ENCODE measurements at regions of chr22 and their contacts with region 1.

Region 1: GRCh38 chr22:29625090-29625825 is 21.8 kb downstream of the NF2 start:
- DNase-seq: peak in 4 of 5 donors; percentile 33 to 48 (median 38)
- H3K4me3 ChIP-seq: no peak overlapping the region
- H3K4me3 Mint-ChIP-seq: peak overlapping the region in 3 of 8 donors; percentile 6 to 47 (median 6)
- H3K27ac ChIP-seq: no peak overlapping the region
- H3K27ac Mint-ChIP-seq: peak overlapping the region in 6 of 7 donors; percentile 8 to 88 (median 48)
- H3K4me1 ChIP-seq: peaks cover 41% of the 10 kb centered on the region
- H3K4me1 Mint-ChIP-seq: peaks cover 49 to 82% (median 64%) of the 10 kb centered on the region in 4 donors
- H3K27me3 ChIP-seq: no peaks in the 10 kb centered on the region
- H3K27me3 Mint-ChIP-seq: no peaks in the 10 kb centered on the region

Region 2: DNA sequence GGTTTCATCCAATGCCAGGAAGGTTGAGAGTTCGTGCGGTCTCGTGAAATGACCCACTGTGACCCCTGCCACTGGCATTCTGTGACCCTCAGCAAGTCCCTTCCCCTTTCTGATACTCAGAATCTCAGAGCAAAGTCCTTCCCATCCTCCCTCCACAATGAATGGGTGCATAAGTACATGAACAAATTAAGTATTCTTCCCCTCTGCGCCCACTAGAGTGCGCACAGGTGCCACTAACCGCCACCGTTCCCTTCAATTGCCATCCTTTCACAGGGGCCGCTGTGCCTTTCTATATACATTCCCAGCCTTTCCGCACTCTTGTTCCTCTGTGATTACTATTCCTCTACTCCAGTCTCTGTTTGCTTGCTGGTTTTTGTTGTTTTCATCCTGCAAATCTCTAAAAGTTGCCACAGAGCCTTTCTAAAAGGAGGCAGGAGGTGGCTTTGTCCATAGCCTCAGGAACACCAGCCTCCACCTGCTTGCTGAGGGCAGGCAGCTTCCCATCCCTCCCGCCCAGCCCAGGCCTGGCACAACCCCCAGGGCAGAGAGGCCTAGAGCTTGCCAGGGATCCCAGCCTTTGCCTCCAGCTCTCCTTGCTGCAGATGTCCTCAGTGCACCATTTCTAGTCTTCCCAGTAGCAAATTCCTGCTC is 230.2 kb before region 1 on chr22:
- CTCF ChIA-PET with region 1: no interaction called
- POLR2A ChIA-PET with region 1: no interaction called
- intact Hi-C with region 1: loop called (anchors 1 kb)
- DNase-seq: peak; percentile 50 to 65 (median 60)
- H3K4me3 ChIP-seq: no peak overlapping the region
- H3K4me3 Mint-ChIP-seq: peak overlapping the region in 1 of 8 donors; percentile 3
- H3K27ac ChIP-seq: no peak overlapping the region
- H3K27ac Mint-ChIP-seq: peak overlapping the region in 1 of 7 donors; percentile 43
- H3K4me1 ChIP-seq: peaks cover 3% of the 10 kb centered on the region
- H3K4me1 Mint-ChIP-seq: peaks cover 5 to 11% (median 6%) of the 10 kb centered on the region in 4 donors
- H3K27me3 ChIP-seq: no peaks in the 10 kb centered on the region
- H3K27me3 Mint-ChIP-seq: no peaks in the 10 kb centered on the region

Region 3: DNA sequence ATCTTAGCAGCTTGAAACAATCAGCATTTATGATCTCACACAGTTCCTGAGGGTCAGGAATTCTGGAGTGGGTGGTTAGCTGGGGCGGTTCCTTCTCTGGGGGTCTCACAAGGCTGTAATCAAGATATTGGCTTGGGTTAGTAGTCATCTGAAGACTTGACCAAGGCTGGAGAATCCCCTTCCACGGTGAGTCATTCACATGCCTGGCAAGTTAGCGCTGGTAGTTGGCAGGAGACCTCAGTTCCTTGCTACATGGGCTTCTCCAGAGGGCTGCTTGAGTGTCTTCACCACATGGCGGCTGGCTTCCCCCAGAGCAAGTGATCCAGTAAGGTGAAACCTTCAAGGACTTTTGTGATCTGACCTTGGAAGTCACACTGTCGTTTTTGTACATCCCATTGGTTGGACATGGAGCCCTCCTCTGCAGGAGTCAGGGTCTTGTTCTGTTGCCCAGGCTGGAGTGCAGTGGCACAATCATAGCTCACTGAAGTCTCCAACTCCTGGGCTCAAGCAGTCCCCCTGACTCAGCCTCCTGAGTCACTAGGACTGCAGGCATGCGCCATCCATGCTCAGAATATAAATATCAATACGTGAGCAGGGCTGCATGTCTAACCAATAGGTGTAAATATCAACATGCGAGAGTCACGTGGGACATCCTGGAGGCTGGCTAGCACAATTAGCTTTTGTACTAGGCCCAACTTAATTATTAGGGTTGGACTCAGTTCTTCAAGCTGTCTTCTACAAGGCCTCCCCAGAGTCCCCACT is 37.1 kb before region 1 on chr22:
- CTCF ChIA-PET with region 1: interaction called, 49 read pairs
- POLR2A ChIA-PET with region 1: interaction called, 3 read pairs
- intact Hi-C with region 1: loop called (anchors 1 kb)
- DNase-seq: no peak
- H3K4me3 ChIP-seq: no peak overlapping the region
- H3K4me3 Mint-ChIP-seq: no peak overlapping the region
- H3K27ac ChIP-seq: no peak overlapping the region
- H3K27ac Mint-ChIP-seq: peak overlapping the region in 3 of 7 donors; percentile 18 to 60 (median 46)
- H3K4me1 ChIP-seq: peaks cover 8% of the 10 kb centered on the region
- H3K4me1 Mint-ChIP-seq: peaks cover 8 to 12% (median 10%) of the 10 kb centered on the region in 4 donors
- H3K27me3 ChIP-seq: no peaks in the 10 kb centered on the region
- H3K27me3 Mint-ChIP-seq: no peaks in the 10 kb centered on the region

Region 4: GRCh38 chr22:29609139-29609538 is 16.1 kb before region 1 on chr22:
- CTCF ChIA-PET with region 1: interaction called, 34 read pairs
- POLR2A ChIA-PET with region 1: interaction called, 8 read pairs
- intact Hi-C with region 1: no loop called
- DNase-seq: no peak
- H3K4me3 ChIP-seq: no peak overlapping the region
- H3K4me3 Mint-ChIP-seq: no peak overlapping the region
- H3K27ac ChIP-seq: no peak overlapping the region
- H3K27ac Mint-ChIP-seq: no peak overlapping the region
- H3K4me1 ChIP-seq: peaks cover 21% of the 10 kb centered on the region
- H3K4me1 Mint-ChIP-seq: peaks cover 11 to 42% (median 21%) of the 10 kb centered on the region in 4 donors
- H3K27me3 ChIP-seq: no peaks in the 10 kb centered on the region
- H3K27me3 Mint-ChIP-seq: no peaks in the 10 kb centered on the region

Region 5: GRCh38 chr22:29635734-29636357 is 10.6 kb after region 1 on chr22:
- CTCF ChIA-PET with region 1: interaction called, 49 read pairs
- POLR2A ChIA-PET with region 1: no interaction called
- intact Hi-C with region 1: no loop called
- DNase-seq: peak in 3 of 5 donors; percentile 12 to 24 (median 15)
- H3K4me3 ChIP-seq: no peak overlapping the region
- H3K4me3 Mint-ChIP-seq: no peak overlapping the region
- H3K27ac ChIP-seq: no peak overlapping the region
- H3K27ac Mint-ChIP-seq: peak overlapping the region in 2 of 7 donors; percentile 10 to 64
- H3K4me1 ChIP-seq: peaks cover 5% of the 10 kb centered on the region
- H3K4me1 Mint-ChIP-seq: peaks cover 13 to 28% (median 24%) of the 10 kb centered on the region in 4 donors
- H3K27me3 ChIP-seq: no peaks in the 10 kb centered on the region
- H3K27me3 Mint-ChIP-seq: no peaks in the 10 kb centered on the region

Measured in CD4-positive, alpha-beta memory T cell (primary cell).